T-cell (primary cell): ENCODE measurements at regions of chr17 and their contacts with region 1.

Region 1: DNA sequence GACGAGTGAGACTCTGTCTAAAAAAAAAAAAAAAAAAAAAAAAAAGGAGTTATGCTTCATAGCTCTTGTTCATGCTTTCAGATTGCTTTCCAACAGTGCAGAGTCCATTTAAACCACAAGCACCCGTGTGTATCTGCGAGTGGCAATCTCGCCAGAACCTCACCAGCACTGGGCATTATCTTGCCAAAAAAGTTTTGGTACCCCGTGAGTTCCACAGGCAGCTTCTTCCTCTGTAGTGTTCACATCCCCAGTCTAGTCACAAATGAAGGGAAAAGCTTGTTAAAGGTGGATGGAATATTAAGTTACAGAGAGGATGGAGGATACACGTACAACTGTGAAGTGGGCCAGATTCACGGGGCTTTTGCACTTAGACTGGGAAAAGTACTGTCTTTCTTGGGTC is 33.5 kb downstream of the WSB1 start:
- DNase-seq: no peak
- ATAC-seq: no peak
- H3K4me3 ChIP-seq: no peak overlapping the region
- H3K4me3 Mint-ChIP-seq: no peak overlapping the region
- H3K27ac ChIP-seq: no peak overlapping the region
- H3K27ac Mint-ChIP-seq: no peak overlapping the region
- H3K4me1 ChIP-seq: peaks cover 0 to 6% of the 10 kb centered on the region in 2 experiments
- H3K4me1 Mint-ChIP-seq: peaks cover 5 to 12% (median 11%) of the 10 kb centered on the region in 3 donors
- H3K27me3 ChIP-seq: peaks cover 0 to 2% of the 10 kb centered on the region in 2 experiments
- H3K27me3 Mint-ChIP-seq: no peaks in the 10 kb centered on the region

Region 2: GRCh38 chr17:27242951-27243350 is 84.4 kb before region 1 on chr17:
- CTCF ChIA-PET with region 1: interaction called, 11 to 62 read pairs
- POLR2A ChIA-PET with region 1: no interaction called
- DNase-seq: no peak
- ATAC-seq: no peak
- H3K4me3 ChIP-seq: no peak overlapping the region
- H3K4me3 Mint-ChIP-seq: no peak overlapping the region
- H3K27ac ChIP-seq: no peak overlapping the region
- H3K27ac Mint-ChIP-seq: no peak overlapping the region
- H3K4me1 ChIP-seq: no peaks in the 10 kb centered on the region
- H3K4me1 Mint-ChIP-seq: peaks cover 0 to 4% (median 3%) of the 10 kb centered on the region in 3 donors
- H3K27me3 ChIP-seq: peaks cover 0 to 9% of the 10 kb centered on the region in 2 experiments
- H3K27me3 Mint-ChIP-seq: peaks cover 3 to 7% of the 10 kb centered on the region in 2 donors

Region 3: GRCh38 chr17:27466743-27467375 is 139.5 kb after region 1 on chr17:
- CTCF ChIA-PET with region 1: no interaction called
- POLR2A ChIA-PET with region 1: no interaction called
- DNase-seq: peak in 16 of 35 experiments; percentile 7 to 56 (median 20)
- ATAC-seq: peak; percentile 69 to 81 (median 72)
- H3K4me3 ChIP-seq: peak overlapping the region in 1 of 2 donors; percentile 9
- H3K4me3 Mint-ChIP-seq: peak overlapping the region; percentile 45 to 62 (median 58)
- H3K27ac ChIP-seq: peak overlapping the region; percentile 49
- H3K27ac Mint-ChIP-seq: peak overlapping the region; percentile 79 to 81
- H3K4me1 ChIP-seq: peaks cover 3 to 30% of the 10 kb centered on the region in 2 experiments
- H3K4me1 Mint-ChIP-seq: peaks cover 56 to 67% (median 59%) of the 10 kb centered on the region in 3 donors
- H3K27me3 ChIP-seq: no peaks in the 10 kb centered on the region
- H3K27me3 Mint-ChIP-seq: no peaks in the 10 kb centered on the region